H1 (cell line): ENCODE measurements at regions of chr20 and their contacts with region 1.

Region 1: GRCh38 chr20:3727401-3728021 is 5.0 kb upstream of the HSPA12B start:
- DNase-seq: no peak
- H3K4me3 ChIP-seq: no peak overlapping the region
- H3K27ac ChIP-seq: no peak overlapping the region
- H3K4me1 ChIP-seq: peaks cover 0 to 6% (median 2%) of the 10 kb centered on the region in 4 experiments; a peak in 3 of 7 replicates
- H3K27me3 ChIP-seq: peaks cover 1 to 18% (median 13%) of the 10 kb centered on the region in 4 experiments; a peak in 4 of 7 replicates
- CTCF ChIP-seq: no peak
- EP300 ChIP-seq: no peak
- POLR2A ChIP-seq: no peak
- RAD21 ChIP-seq: no peak

Region 2: GRCh38 chr20:3350422-3350821 is 377.1 kb before region 1 on chr20:
- CTCF ChIA-PET with region 1: no interaction called
- POLR2A ChIA-PET with region 1: no interaction called
- DNase-seq: no peak
- H3K4me3 ChIP-seq: no peak overlapping the region
- H3K27ac ChIP-seq: no peak overlapping the region
- H3K4me1 ChIP-seq: no peaks in the 10 kb centered on the region
- H3K27me3 ChIP-seq: no peaks in the 10 kb centered on the region; a peak in 1 of 7 replicates
- CTCF ChIP-seq: no peak
- EP300 ChIP-seq: no peak
- POLR2A ChIP-seq: no peak
- RAD21 ChIP-seq: no peak

Region 3: GRCh38 chr20:3446779-3447178 is 280.7 kb before region 1 on chr20:
- CTCF ChIA-PET with region 1: no interaction called
- POLR2A ChIA-PET with region 1: no interaction called
- DNase-seq: no peak
- H3K4me3 ChIP-seq: no peak overlapping the region
- H3K27ac ChIP-seq: no peak overlapping the region
- H3K4me1 ChIP-seq: no peaks in the 10 kb centered on the region
- H3K27me3 ChIP-seq: no peaks in the 10 kb centered on the region
- CTCF ChIP-seq: no peak
- EP300 ChIP-seq: no peak
- POLR2A ChIP-seq: no peak
- RAD21 ChIP-seq: no peak

Region 4: GRCh38 chr20:3739054-3739925 is 11.8 kb after region 1 on chr20:
- CTCF ChIA-PET with region 1: interaction called, 11 read pairs
- POLR2A ChIA-PET with region 1: interaction called, 13 read pairs
- DNase-seq: no peak
- H3K4me3 ChIP-seq: no peak overlapping the region
- H3K27ac ChIP-seq: no peak overlapping the region
- H3K4me1 ChIP-seq: peaks cover 0 to 19% (median 9%) of the 10 kb centered on the region in 4 experiments; a peak in 6 of 7 replicates
- H3K27me3 ChIP-seq: peaks cover 0 to 4% (median 0%) of the 10 kb centered on the region in 4 experiments; a peak in 2 of 7 replicates
- CTCF ChIP-seq: no peak
- EP300 ChIP-seq: no peak
- POLR2A ChIP-seq: no peak
- RAD21 ChIP-seq: no peak